CD8-positive, alpha-beta T cell (primary cell): ENCODE measurements at regions of chr6 and their contacts with region 1.

Region 1: GRCh38 chr6:41545703-41546474 is at the start of gene FOXP4:
- DNase-seq: peak; percentile 60 to 93 (median 84)
- ATAC-seq: peak; percentile 85
- H3K4me3 ChIP-seq: peak within 1 kb of the TSS; percentile 67 to 79
- H3K4me3 Mint-ChIP-seq: peak within 1 kb of the TSS; percentile 94
- H3K27ac ChIP-seq: no peak within 1 kb of the TSS
- H3K27ac Mint-ChIP-seq: peak within 1 kb of the TSS; percentile 77
- H3K4me1 ChIP-seq: peaks cover 28% of the 10 kb centered on the region
- H3K4me1 Mint-ChIP-seq: peaks cover 21% of the 10 kb centered on the region
- H3K27me3 ChIP-seq: peaks cover 18 to 20% of the 10 kb centered on the region in 2 experiments
- H3K27me3 Mint-ChIP-seq: peaks cover 16% of the 10 kb centered on the region
- CTCF ChIP-seq: no peak
- total RNA-seq, gene FOXP4: 9.9 to 11.4 TPM

Region 2: GRCh38 chr6:41072676-41073623 is 472.9 kb before region 1 on chr6 and contains the start of gene NFYA:
- CTCF ChIA-PET with region 1: no interaction called
- POLR2A ChIA-PET with region 1: no interaction called
- intact Hi-C with region 1: loop called in 1 of 2 experiments (anchors 2 kb)
- DNase-seq: peak; percentile 99 to 100 (median 100)
- ATAC-seq: peak; percentile 70
- H3K4me3 ChIP-seq: peak within 1 kb of the TSS; percentile 72 to 86
- H3K4me3 Mint-ChIP-seq: peak within 1 kb of the TSS; percentile 92
- H3K27ac ChIP-seq: peak within 1 kb of the TSS; percentile 88 to 89
- H3K27ac Mint-ChIP-seq: peak within 1 kb of the TSS; percentile 95
- H3K4me1 ChIP-seq: peaks cover 37% of the 10 kb centered on the region
- H3K4me1 Mint-ChIP-seq: peaks cover 55% of the 10 kb centered on the region
- H3K27me3 ChIP-seq: no peaks in the 10 kb centered on the region
- H3K27me3 Mint-ChIP-seq: no peaks in the 10 kb centered on the region
- CTCF ChIP-seq: peak; percentile 46
- total RNA-seq, gene NFYA: 31.7 to 32.7 TPM

Region 3: DNA sequence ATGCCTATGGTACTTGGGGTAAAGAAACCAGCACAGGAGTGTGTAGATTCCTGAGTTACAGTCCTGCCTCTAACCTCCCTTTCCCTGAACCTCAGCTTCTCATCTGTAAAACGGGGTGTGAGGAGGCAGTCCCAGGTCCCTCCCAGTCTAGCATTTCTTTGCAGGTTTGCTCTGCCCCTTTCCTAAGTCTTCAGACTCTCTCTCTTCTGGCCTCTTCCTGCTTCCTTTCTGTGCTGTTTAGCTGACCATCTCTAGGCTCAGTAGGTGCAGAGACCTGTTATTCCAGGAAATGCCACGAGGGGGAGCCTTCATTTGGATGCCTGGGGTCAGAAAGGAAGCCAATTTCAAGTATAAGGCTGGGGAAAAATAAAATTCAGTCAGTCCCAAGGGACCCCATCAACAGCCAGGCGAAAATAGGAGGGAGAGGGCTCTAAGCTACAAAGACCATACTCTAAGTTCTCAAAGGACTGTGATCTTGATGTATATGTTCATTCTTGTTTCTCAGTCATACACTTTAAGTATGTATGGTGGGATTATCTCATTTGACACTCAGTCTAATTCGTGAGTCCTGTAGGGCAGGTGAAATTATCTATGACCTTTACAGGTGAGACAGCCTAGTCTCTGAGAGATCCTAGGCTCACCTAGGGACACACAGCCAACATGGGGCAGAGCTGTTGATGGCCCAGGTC is 121.4 kb before region 1 on chr6:
- CTCF ChIA-PET with region 1: interaction called, 5 read pairs
- POLR2A ChIA-PET with region 1: interaction called, 5 read pairs
- intact Hi-C with region 1: loop called (anchors 1 kb)
- DNase-seq: peak; percentile 67 to 89 (median 78)
- ATAC-seq: peak; percentile 62
- H3K4me3 ChIP-seq: no peak overlapping the region
- H3K4me3 Mint-ChIP-seq: no peak overlapping the region
- H3K27ac ChIP-seq: no peak overlapping the region
- H3K27ac Mint-ChIP-seq: no peak overlapping the region
- H3K4me1 ChIP-seq: peaks cover 32% of the 10 kb centered on the region
- H3K4me1 Mint-ChIP-seq: peaks cover 9% of the 10 kb centered on the region
- H3K27me3 ChIP-seq: peaks cover 16 to 28% of the 10 kb centered on the region in 2 experiments
- H3K27me3 Mint-ChIP-seq: peaks cover 21% of the 10 kb centered on the region
- CTCF ChIP-seq: peak; percentile 91

Region 4: GRCh38 chr6:41466434-41466990 is 79.4 kb before region 1 on chr6:
- CTCF ChIA-PET with region 1: no interaction called
- POLR2A ChIA-PET with region 1: no interaction called
- intact Hi-C with region 1: loop called in 1 of 2 experiments (anchors 2 kb)
- DNase-seq: no peak
- ATAC-seq: no peak
- H3K4me3 ChIP-seq: no peak overlapping the region
- H3K4me3 Mint-ChIP-seq: no peak overlapping the region
- H3K27ac ChIP-seq: no peak overlapping the region
- H3K27ac Mint-ChIP-seq: no peak overlapping the region
- H3K4me1 ChIP-seq: no peaks in the 10 kb centered on the region
- H3K4me1 Mint-ChIP-seq: peaks cover 12% of the 10 kb centered on the region
- H3K27me3 ChIP-seq: peaks cover 13% of the 10 kb centered on the region in 2 experiments
- H3K27me3 Mint-ChIP-seq: peaks cover 70% of the 10 kb centered on the region
- CTCF ChIP-seq: no peak

Region 5: GRCh38 chr6:41560431-41561192 is 14.7 kb after region 1 on chr6:
- CTCF ChIA-PET with region 1: interaction called, 3 read pairs
- POLR2A ChIA-PET with region 1: no interaction called
- intact Hi-C with region 1: loop called (anchors 1 kb)
- DNase-seq: peak; percentile 67 to 97 (median 85)
- ATAC-seq: peak; percentile 93
- H3K4me3 ChIP-seq: peak overlapping the region; percentile 49 to 53
- H3K4me3 Mint-ChIP-seq: peak overlapping the region; percentile 85
- H3K27ac ChIP-seq: peak overlapping the region; percentile 32 to 41
- H3K27ac Mint-ChIP-seq: peak overlapping the region; percentile 86
- H3K4me1 ChIP-seq: peaks cover 20% of the 10 kb centered on the region
- H3K4me1 Mint-ChIP-seq: peaks cover 29% of the 10 kb centered on the region
- H3K27me3 ChIP-seq: no peaks in the 10 kb centered on the region
- H3K27me3 Mint-ChIP-seq: peaks cover 12% of the 10 kb centered on the region
- CTCF ChIP-seq: no peak